Panc1 (cell line): ENCODE measurements at regions of chr6 and their contacts with region 1.

Region 1: DNA sequence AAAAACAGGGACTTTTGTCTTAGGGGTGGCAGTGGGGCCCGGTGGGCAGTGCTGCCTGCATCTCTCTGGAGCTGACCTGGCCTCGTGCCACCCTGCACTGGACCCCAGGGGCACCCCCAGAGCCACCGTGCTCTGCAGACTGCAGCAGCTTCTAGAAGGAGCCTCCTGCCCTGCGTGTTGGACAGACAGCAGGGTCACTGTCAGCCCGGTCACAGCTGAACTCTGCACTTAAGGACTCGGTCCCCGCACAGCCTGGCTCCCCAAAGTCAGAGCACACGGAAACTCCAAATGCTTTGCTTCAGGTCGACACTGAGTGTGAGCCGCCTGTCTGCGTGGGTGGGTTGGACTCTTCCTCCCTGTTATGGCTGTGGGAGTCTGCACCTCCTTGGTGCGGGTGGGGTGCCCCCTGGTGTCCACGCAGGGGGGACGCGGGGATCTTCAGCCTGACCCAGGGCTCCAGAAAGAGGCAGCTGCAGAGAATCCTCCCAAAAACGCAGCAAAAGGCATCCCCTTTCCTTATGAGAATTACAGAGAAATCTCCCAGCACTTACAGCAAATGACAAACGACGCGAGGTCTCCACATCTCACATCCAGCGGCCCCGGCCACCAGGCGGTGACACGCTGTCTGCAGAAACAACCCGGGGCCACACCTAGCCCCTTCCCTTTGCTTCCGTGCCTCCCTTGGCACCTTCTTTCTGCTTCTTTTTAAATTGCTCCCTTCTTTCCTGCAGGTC is 36.3 kb upstream of the DACT2 start:
- DNase-seq: no peak
- ATAC-seq: peak; percentile 99
- H3K4me3 ChIP-seq: no peak overlapping the region; a peak in 1 of 4 replicates
- H3K27ac ChIP-seq: no peak overlapping the region
- H3K4me1 ChIP-seq: no peaks in the 10 kb centered on the region
- H3K27me3 ChIP-seq: no peaks in the 10 kb centered on the region
- CTCF ChIP-seq: peak; percentile 96

Region 2: DNA sequence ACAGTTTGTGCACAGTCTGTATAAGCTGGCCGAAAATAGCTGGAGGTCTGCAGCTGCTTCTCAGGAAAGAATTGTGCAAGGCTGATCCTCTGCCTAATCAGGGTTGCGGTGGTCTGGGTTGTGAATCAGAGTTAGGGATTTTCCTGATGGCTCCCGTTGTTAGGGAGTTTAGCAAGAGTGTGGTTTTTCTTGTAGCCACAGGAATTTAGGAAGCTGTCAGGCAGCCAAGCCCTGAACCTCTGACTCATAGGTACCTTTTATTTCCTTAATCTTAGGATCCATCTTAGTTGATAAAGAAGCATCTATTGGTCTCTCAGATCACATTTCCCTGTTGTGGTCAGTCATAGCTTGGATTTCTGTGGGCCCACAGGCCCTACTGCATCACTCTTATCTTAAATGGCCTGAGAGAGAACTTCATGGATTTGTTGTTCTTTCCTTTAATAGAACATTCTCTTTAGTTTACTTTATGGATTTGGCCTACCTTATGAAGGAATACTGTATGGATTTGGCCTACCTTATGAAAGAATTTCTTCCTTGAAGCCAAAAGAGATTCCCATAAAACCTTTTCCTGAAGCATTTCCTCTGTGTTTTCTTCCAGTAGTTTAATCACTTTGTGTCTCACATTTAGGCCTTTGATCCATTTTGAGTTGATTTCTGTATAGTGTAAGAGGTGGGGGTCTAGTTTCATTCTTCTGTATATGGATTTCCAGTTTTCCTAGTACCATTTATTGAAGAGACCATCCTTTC is 348.1 kb before region 1 on chr6:
- CTCF ChIA-PET with region 1: no interaction called
- POLR2A ChIA-PET with region 1: no interaction called
- in situ Hi-C with region 1: no loop called
- intact Hi-C with region 1: no loop called
- DNase-seq: peak; percentile 79
- ATAC-seq: peak; percentile 97
- H3K4me3 ChIP-seq: no peak overlapping the region
- H3K27ac ChIP-seq: peak overlapping the region; percentile 70
- H3K4me1 ChIP-seq: peaks cover 14% of the 10 kb centered on the region; the same call in 1 of the 2 replicates
- H3K27me3 ChIP-seq: no peaks in the 10 kb centered on the region
- CTCF ChIP-seq: no peak

Region 3: GRCh38 chr6:168150551-168151320 is 205.1 kb before region 1 on chr6:
- CTCF ChIA-PET with region 1: no interaction called
- POLR2A ChIA-PET with region 1: no interaction called
- in situ Hi-C with region 1: no loop called
- intact Hi-C with region 1: loop called (anchors 2 kb)
- DNase-seq: no peak
- ATAC-seq: peak; percentile 70; the same call in 1 of the 2 replicates
- H3K4me3 ChIP-seq: no peak overlapping the region
- H3K27ac ChIP-seq: no peak overlapping the region
- H3K4me1 ChIP-seq: peaks cover 8% of the 10 kb centered on the region
- H3K27me3 ChIP-seq: no peaks in the 10 kb centered on the region
- CTCF ChIP-seq: peak; percentile 88

Region 4: DNA sequence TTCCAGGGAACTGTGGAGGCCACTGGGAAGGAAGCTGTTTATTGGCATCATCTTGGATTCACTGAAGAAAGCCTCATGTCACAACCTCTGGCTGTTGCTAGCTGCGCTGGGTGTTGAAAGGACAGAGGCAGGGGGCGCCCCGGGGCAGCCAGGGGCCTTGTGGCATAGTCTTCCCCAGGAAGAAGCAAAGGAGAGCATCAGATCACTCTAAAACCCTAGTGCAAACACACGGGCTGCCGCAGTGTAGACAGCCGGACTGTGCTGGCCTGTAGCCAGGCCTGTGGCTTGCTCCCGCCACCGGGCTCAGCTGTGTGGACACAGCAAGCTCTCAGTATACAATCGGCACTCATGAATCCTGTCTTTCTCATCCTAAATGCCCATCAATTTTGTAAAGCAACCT is 61.3 kb after region 1 on chr6:
- CTCF ChIA-PET with region 1: no interaction called
- POLR2A ChIA-PET with region 1: no interaction called
- in situ Hi-C with region 1: no loop called
- intact Hi-C with region 1: no loop called
- DNase-seq: no peak
- ATAC-seq: no peak
- H3K4me3 ChIP-seq: no peak overlapping the region
- H3K27ac ChIP-seq: no peak overlapping the region
- H3K4me1 ChIP-seq: no peaks in the 10 kb centered on the region
- H3K27me3 ChIP-seq: peaks cover 10% of the 10 kb centered on the region
- CTCF ChIP-seq: no peak